Sciatic nerve (tissue), 2 donors: ENCODE measurements at regions of chr15 and their contacts with region 1.

Region 1: GRCh38 chr15:71448688-71449114 is 333.4 kb downstream of the THSD4 start:
- DNase-seq: no peak
- ATAC-seq: peak; percentile 68

Region 2: DNA sequence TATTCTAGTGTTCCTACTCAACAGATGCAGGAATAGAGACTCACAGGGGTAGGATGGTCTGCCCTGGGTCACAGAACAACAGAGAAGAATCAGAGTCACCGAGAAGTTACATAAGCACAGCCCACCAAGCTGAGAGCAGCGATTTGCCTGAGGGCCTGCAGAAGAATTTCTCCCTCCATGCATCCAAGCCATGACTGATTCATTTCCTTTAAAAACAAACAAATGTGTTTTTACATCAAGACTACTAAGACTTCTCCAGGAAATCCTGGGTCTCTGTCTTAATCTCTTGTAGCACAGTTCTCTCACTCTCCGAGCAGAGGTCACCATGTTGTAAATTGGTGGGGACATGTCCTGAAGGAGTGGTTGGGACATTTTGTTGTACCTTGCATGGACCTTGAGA is 173.6 kb before region 1 on chr15:
- intact Hi-C with region 1: no loop called
- DNase-seq: no peak
- ATAC-seq: no peak

Region 3: GRCh38 chr15:71728881-71729280 is 280.2 kb after region 1 on chr15:
- intact Hi-C with region 1: loop called (anchors 10 kb)
- DNase-seq: no peak
- ATAC-seq: no peak

Region 4: DNA sequence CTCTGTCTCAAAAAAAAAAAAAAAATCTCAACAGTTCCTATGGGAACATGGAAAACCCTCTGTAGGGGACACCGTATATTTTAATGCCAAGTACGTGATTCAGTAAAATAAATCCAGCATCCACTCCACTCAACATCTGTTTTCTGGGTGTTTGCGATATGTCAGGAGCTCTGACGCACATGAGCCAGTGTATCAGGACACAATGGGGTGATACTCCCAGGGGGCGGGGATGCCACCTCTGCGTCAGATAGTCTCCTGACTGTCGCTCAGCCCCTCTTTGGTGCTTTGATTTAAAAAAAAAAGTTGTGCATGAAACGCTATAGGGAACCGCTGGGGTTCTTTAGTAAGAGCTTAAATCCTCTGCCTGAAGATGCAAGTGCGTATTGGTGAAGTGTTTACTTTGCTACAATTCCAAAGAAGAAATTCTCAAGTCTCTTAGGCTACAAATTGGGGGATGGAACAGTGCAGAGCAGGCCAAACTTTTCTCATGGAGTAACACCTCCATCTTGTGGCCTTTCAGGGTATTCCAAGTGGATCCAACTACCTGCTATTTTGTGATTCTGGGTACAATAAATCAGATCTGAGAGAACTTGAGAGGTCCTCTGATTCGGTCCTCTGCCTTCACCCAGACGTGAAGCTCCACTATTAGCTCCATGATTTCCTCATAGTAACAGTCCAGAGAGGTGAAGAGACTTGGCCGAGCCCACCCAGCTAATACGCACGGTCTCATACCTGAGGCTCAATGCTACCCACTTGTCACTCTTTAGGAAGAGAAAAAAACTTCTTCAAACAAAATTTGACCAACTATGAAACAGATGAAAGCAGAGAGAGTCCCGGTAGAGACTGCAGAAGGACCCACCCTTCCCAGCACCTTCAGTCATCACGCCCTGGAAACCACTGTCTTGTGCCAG is 352.4 kb after region 1 on chr15:
- intact Hi-C with region 1: loop called (anchors 10 kb)
- DNase-seq: no peak
- ATAC-seq: peak; percentile 91